ENCODE measurements at regions of chr16 and their contacts with region 1.

Region 1: DNA sequence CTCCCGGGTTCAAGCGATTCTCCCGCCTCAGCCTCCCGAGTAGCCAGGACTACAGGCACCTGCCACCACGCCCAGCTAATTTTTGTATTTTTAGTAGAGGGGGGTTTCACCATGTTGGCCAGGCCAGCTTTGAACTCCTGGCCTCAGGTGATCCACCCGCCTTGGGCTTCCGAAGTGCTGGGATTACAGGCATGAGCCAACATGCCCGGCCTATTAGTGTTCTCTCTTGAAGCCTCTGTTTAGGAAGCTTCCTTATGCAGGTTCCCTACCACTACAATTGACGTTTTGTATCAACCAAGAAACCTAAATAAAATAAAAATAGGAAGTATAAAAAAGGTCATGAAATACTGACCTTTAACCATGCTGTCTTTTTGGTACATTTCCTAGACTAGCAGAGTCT is 16.0 kb downstream of the CHST5 start:
- DNase-seq: no peak
- ATAC-seq: no peak
- H3K4me3 ChIP-seq: no peak overlapping the region
- H3K27ac ChIP-seq: no peak overlapping the region
- H3K4me1 ChIP-seq: peaks cover 0 to 14% of the 10 kb centered on the region in 2 experiments; a peak in 3 of 5 replicates
- H3K27me3 ChIP-seq: peaks cover 8 to 14% of the 10 kb centered on the region in 2 experiments; a peak in 4 of 5 replicates
- CTCF ChIP-seq: no peak
- EP300 ChIP-seq: no peak
- POLR2A ChIP-seq: no peak
- RAD21 ChIP-seq: no peak

Region 2: GRCh38 chr16:75471723-75472633 is 47.9 kb before region 1 on chr16:
- CTCF ChIA-PET with region 1: no interaction called
- POLR2A ChIA-PET with region 1: interaction called, 3 read pairs
- in situ Hi-C with region 1: no loop called
- intact Hi-C with region 1: loop called (anchors 2 kb)
- DNase-seq: peak; percentile 71 to 79 (median 73)
- ATAC-seq: peak; percentile 98
- H3K4me3 ChIP-seq: no peak overlapping the region
- H3K27ac ChIP-seq: no peak overlapping the region
- H3K4me1 ChIP-seq: no peaks in the 10 kb centered on the region
- H3K27me3 ChIP-seq: peaks cover 4 to 9% of the 10 kb centered on the region in 2 experiments; a peak in 3 of 5 replicates
- CTCF ChIP-seq: peak; percentile 81 to 86 (median 86)
- EP300 ChIP-seq: no peak
- POLR2A ChIP-seq: no peak
- RAD21 ChIP-seq: peak; percentile 74 to 92

Region 3: GRCh38 chr16:75506567-75506966 is 13.3 kb before region 1 on chr16:
- CTCF ChIA-PET with region 1: no interaction called
- POLR2A ChIA-PET with region 1: interaction called, 17 read pairs
- in situ Hi-C with region 1: no loop called
- intact Hi-C with region 1: no loop called
- DNase-seq: no peak
- ATAC-seq: peak; percentile 31
- H3K4me3 ChIP-seq: no peak overlapping the region
- H3K27ac ChIP-seq: no peak overlapping the region
- H3K4me1 ChIP-seq: peaks cover 5 to 16% of the 10 kb centered on the region in 2 experiments; a peak in 3 of 5 replicates
- H3K27me3 ChIP-seq: peaks cover 3 to 18% of the 10 kb centered on the region in 2 experiments; a peak in 4 of 5 replicates
- CTCF ChIP-seq: no peak
- EP300 ChIP-seq: no peak
- POLR2A ChIP-seq: no peak
- RAD21 ChIP-seq: no peak

Region 4: DNA sequence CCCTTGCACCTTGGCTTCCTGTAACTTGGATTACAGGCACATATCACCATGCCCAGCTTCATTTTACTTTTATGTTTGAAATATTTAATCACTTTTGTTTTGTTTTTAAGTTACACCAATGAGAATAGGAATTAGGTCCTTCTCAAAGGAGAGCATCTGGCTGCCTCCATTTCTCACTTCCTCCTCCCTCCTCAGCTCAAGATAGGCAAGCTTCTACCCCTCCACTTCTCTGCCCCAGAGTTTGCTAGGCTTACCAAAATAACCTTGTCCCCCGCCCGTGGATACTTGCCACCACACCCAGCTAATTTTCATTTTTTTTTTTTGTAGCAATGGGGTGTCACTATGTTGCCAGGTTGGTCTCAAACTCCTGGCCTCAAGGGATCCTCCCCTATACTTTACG is 64.2 kb after region 1 on chr16:
- CTCF ChIA-PET with region 1: no interaction called
- POLR2A ChIA-PET with region 1: no interaction called
- in situ Hi-C with region 1: no loop called
- intact Hi-C with region 1: loop called (anchors 2 kb)
- DNase-seq: no peak
- ATAC-seq: no peak
- H3K4me3 ChIP-seq: no peak overlapping the region
- H3K27ac ChIP-seq: no peak overlapping the region
- H3K4me1 ChIP-seq: no peaks in the 10 kb centered on the region; a peak in 1 of 5 replicates
- H3K27me3 ChIP-seq: no peaks in the 10 kb centered on the region
- CTCF ChIP-seq: no peak
- EP300 ChIP-seq: no peak
- POLR2A ChIP-seq: no peak
- RAD21 ChIP-seq: no peak

Region 5: GRCh38 chr16:75679366-75679765 is 159.5 kb after region 1 on chr16:
- CTCF ChIA-PET with region 1: no interaction called
- POLR2A ChIA-PET with region 1: no interaction called
- in situ Hi-C with region 1: no loop called
- intact Hi-C with region 1: no loop called
- DNase-seq: no peak
- ATAC-seq: no peak
- H3K4me3 ChIP-seq: no peak overlapping the region
- H3K27ac ChIP-seq: no peak overlapping the region
- H3K4me1 ChIP-seq: no peaks in the 10 kb centered on the region
- H3K27me3 ChIP-seq: peaks cover 16 to 40% of the 10 kb centered on the region in 2 experiments; a peak in 4 of 5 replicates
- CTCF ChIP-seq: no peak
- EP300 ChIP-seq: no peak
- POLR2A ChIP-seq: no peak
- RAD21 ChIP-seq: no peak

Region 6: GRCh38 chr16:75727221-75727620 is 207.3 kb after region 1 on chr16:
- CTCF ChIA-PET with region 1: no interaction called
- POLR2A ChIA-PET with region 1: no interaction called
- in situ Hi-C with region 1: no loop called
- intact Hi-C with region 1: no loop called
- DNase-seq: no peak
- ATAC-seq: no peak
- H3K4me3 ChIP-seq: no peak overlapping the region
- H3K27ac ChIP-seq: no peak overlapping the region
- H3K4me1 ChIP-seq: no peaks in the 10 kb centered on the region
- H3K27me3 ChIP-seq: peaks cover 0 to 11% of the 10 kb centered on the region in 2 experiments; a peak in 1 of 5 replicates
- CTCF ChIP-seq: no peak
- EP300 ChIP-seq: no peak
- POLR2A ChIP-seq: no peak
- RAD21 ChIP-seq: no peak